A549 (cell line): ENCODE measurements at regions of chr19 and their contacts with region 1.

Region 1: GRCh38 chr19:45059278-45059965 is 16.9 kb downstream of the ZNF296 start:
- DNase-seq: peak; percentile 88 to 89
- ATAC-seq: peak; percentile 73 to 90
- H3K4me3 ChIP-seq: no peak overlapping the region
- H3K27ac ChIP-seq: no peak overlapping the region
- H3K4me1 ChIP-seq: 0 out of 3 replicates have a peak, but pooled peaks cover 3% of the 10 kb centered on the region
- CTCF ChIP-seq: peak; percentile 98
- EP300 ChIP-seq: no peak
- POLR2A ChIP-seq: no peak
- RAD21 ChIP-seq: peak; percentile 81 to 88

Region 2: GRCh38 chr19:44954824-44955586 is 104.4 kb before region 1 on chr19 and contains the start of gene CLPTM1:
- CTCF ChIA-PET with region 1: interaction called, 15 read pairs
- POLR2A ChIA-PET with region 1: no interaction called
- DNase-seq: peak; percentile 99 to 100
- ATAC-seq: peak; percentile 91 to 95
- H3K4me3 ChIP-seq: peak within 1 kb of the TSS; percentile 98
- H3K27ac ChIP-seq: peak within 1 kb of the TSS; percentile 90 to 91
- H3K4me1 ChIP-seq: peaks cover 23% of the 10 kb centered on the region
- CTCF ChIP-seq: no peak
- EP300 ChIP-seq: no peak
- POLR2A ChIP-seq: peak; percentile 76
- RAD21 ChIP-seq: no peak
- polyA plus RNA-seq, gene CLPTM1: 96.5 and 99.3 TPM in 2 replicates

Region 3: DNA sequence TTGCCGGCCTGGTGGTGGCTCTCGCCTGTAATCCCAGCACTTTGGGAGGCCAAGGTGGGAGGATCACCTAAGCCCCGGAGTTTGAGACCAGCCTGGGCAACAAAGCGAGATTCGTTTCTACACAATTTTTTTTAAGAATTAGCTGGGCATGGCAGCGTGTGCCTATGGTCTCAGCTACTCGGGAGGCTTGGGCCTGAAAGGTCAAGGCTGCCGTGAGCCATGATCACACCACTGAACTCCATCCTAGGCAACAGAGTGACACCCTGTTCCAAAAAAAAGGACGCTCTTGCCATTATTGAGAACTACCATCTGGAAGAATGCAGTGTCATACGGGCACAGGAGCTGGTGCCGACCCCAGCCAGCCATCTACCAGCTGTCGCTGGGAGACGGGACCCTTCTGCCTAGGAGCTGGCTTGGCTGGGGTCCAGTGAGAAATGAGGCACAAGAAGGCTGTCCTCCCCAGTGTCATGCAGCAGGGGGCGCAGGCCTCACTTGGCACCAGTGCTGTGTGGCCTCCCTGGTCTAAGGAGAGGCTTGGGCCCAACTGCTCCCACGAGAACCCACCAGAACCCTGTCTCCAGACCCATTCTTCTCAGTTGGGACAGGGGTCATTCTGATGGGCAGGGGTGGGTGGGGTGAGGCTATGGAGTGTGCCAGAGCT is 70.4 kb before region 1 on chr19:
- CTCF ChIA-PET with region 1: interaction called, 59 read pairs
- POLR2A ChIA-PET with region 1: no interaction called
- DNase-seq: peak; percentile 75 to 85
- ATAC-seq: peak; percentile 60 to 83
- H3K4me3 ChIP-seq: no peak overlapping the region
- H3K27ac ChIP-seq: no peak overlapping the region
- H3K4me1 ChIP-seq: no peaks in the 10 kb centered on the region
- CTCF ChIP-seq: peak; percentile 62
- EP300 ChIP-seq: no peak
- POLR2A ChIP-seq: no peak
- RAD21 ChIP-seq: peak; percentile 44 to 47; a peak in 3 of 5 replicates

Region 4: DNA sequence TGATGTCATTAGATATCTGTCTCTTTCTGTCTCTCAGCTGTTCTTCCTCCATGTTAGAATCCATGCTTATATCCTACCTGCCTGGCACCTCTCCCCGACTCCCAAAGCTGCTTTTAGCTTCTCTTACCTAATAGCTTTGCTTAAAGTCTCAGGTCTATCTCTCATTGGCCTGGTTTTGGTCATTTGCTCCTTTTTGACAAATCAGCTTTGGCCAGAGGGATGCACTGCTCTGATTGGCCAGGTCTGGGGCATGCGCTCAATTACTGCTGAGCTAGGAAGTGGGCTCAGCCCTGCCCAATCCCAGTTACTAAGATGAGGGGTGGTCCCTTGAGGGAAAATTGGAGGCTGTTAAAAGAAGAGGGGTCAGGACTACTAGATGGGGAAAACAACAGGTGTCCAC is 32.1 kb before region 1 on chr19:
- CTCF ChIA-PET with region 1: interaction called, 16 read pairs
- POLR2A ChIA-PET with region 1: no interaction called
- DNase-seq: no peak
- ATAC-seq: peak; percentile 54 to 65; a peak in 4 of 6 replicates
- H3K4me3 ChIP-seq: no peak overlapping the region
- H3K27ac ChIP-seq: no peak overlapping the region
- H3K4me1 ChIP-seq: no peaks in the 10 kb centered on the region
- CTCF ChIP-seq: no peak
- EP300 ChIP-seq: no peak
- POLR2A ChIP-seq: no peak
- RAD21 ChIP-seq: no peak

Region 5: GRCh38 chr19:45049073-45049736 is 10.2 kb before region 1 on chr19:
- CTCF ChIA-PET with region 1: interaction called, 152 read pairs
- POLR2A ChIA-PET with region 1: no interaction called
- DNase-seq: no peak
- ATAC-seq: peak in 1 of 2 experiments; percentile 41; a peak in 3 of 6 replicates
- H3K4me3 ChIP-seq: no peak overlapping the region
- H3K27ac ChIP-seq: peak overlapping the region in 1 of 2 experiments; percentile 26; a peak in 2 of 6 replicates
- H3K4me1 ChIP-seq: 0 out of 3 replicates have a peak, but pooled peaks cover 6% of the 10 kb centered on the region
- CTCF ChIP-seq: no peak
- EP300 ChIP-seq: no peak
- POLR2A ChIP-seq: no peak
- RAD21 ChIP-seq: no peak